CD8-positive, alpha-beta T cell (primary cell): ENCODE measurements at regions of chr19 and their contacts with region 1.

Region 1: DNA sequence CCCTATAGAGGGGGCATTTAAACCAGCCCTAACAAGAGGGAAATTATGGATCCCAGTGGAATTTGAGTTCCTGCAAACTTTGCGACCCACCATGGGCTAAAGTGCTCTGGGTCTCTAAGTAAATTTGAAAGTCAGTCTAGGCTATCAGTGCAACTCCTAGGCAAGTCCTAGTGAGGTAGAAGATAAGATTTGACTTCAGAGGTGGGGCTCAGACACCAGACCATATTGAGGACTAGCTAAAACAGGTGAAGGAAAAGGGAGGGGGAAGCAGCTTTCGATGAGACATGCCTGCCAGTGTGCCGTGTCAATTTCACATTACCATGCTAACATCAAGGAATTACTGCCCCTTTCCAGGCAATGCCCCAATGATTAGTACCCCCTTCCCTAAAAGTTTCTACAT is 38.4 kb downstream of the CD320 start:
- DNase-seq: peak in 1 of 9 experiments; percentile 39
- ATAC-seq: no peak
- H3K4me3 ChIP-seq: peak overlapping the region; percentile 69 to 90
- H3K4me3 Mint-ChIP-seq: peak overlapping the region; percentile 95
- H3K27ac ChIP-seq: peak overlapping the region; percentile 77 to 81
- H3K27ac Mint-ChIP-seq: peak overlapping the region; percentile 96
- H3K4me1 ChIP-seq: peaks cover 10% of the 10 kb centered on the region
- H3K4me1 Mint-ChIP-seq: peaks cover 16% of the 10 kb centered on the region
- H3K27me3 ChIP-seq: no peaks in the 10 kb centered on the region
- H3K27me3 Mint-ChIP-seq: no peaks in the 10 kb centered on the region
- CTCF ChIP-seq: no peak

Region 2: GRCh38 chr19:7550987-7551761 is 718.5 kb before region 1 on chr19:
- CTCF ChIA-PET with region 1: no interaction called
- POLR2A ChIA-PET with region 1: no interaction called
- intact Hi-C with region 1: no loop called
- DNase-seq: peak in 5 of 9 experiments; percentile 24 to 56 (median 45)
- ATAC-seq: peak; percentile 84
- H3K4me3 ChIP-seq: no peak overlapping the region
- H3K4me3 Mint-ChIP-seq: no peak overlapping the region
- H3K27ac ChIP-seq: no peak overlapping the region
- H3K27ac Mint-ChIP-seq: no peak overlapping the region
- H3K4me1 ChIP-seq: no peaks in the 10 kb centered on the region
- H3K4me1 Mint-ChIP-seq: peaks cover 8% of the 10 kb centered on the region
- H3K27me3 ChIP-seq: no peaks in the 10 kb centered on the region
- H3K27me3 Mint-ChIP-seq: no peaks in the 10 kb centered on the region
- CTCF ChIP-seq: no peak

Region 3: GRCh38 chr19:7618771-7619514 is 650.8 kb before region 1 on chr19:
- CTCF ChIA-PET with region 1: no interaction called
- POLR2A ChIA-PET with region 1: no interaction called
- intact Hi-C with region 1: no loop called
- DNase-seq: no peak
- ATAC-seq: no peak
- H3K4me3 ChIP-seq: no peak overlapping the region
- H3K4me3 Mint-ChIP-seq: no peak overlapping the region
- H3K27ac ChIP-seq: no peak overlapping the region
- H3K27ac Mint-ChIP-seq: no peak overlapping the region
- H3K4me1 ChIP-seq: no peaks in the 10 kb centered on the region
- H3K4me1 Mint-ChIP-seq: no peaks in the 10 kb centered on the region
- H3K27me3 ChIP-seq: no peaks in the 10 kb centered on the region
- H3K27me3 Mint-ChIP-seq: no peaks in the 10 kb centered on the region
- CTCF ChIP-seq: no peak

Region 4: DNA sequence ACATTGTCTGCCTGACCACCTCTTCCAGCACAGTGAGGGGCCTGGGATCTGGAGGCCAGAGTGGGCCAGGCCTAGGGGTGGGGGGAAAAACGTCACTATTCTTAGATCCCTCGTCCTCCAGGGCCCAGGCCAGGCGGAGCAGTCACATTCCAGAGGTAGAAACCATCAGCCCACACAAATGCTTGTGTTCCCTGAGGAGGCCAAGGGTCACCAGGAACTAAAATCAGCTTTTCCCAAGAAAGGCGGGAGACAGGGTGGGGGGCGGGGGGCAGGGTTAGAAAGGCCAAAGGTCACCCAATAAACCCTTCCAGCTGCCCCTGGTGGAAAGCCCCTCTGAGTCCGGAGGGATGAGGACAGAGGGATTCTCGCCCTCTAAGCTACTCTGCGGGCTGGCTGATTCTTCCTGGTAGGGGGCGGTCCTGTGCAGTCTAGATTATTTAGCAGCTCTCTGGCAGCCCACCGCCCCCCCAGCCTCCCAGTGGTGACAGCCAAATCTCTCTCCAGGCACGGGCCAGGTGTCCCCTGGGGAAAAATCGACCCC is 240.7 kb before region 1 on chr19:
- CTCF ChIA-PET with region 1: no interaction called
- POLR2A ChIA-PET with region 1: no interaction called
- intact Hi-C with region 1: no loop called
- DNase-seq: no peak
- ATAC-seq: no peak
- H3K4me3 ChIP-seq: no peak overlapping the region
- H3K4me3 Mint-ChIP-seq: no peak overlapping the region
- H3K27ac ChIP-seq: no peak overlapping the region
- H3K27ac Mint-ChIP-seq: no peak overlapping the region
- H3K4me1 ChIP-seq: no peaks in the 10 kb centered on the region
- H3K4me1 Mint-ChIP-seq: no peaks in the 10 kb centered on the region
- H3K27me3 ChIP-seq: no peaks in the 10 kb centered on the region
- H3K27me3 Mint-ChIP-seq: no peaks in the 10 kb centered on the region
- CTCF ChIP-seq: no peak

Region 5: GRCh38 chr19:8208922-8209461 is 60.7 kb before region 1 on chr19 and contains the start of gene CERS4:
- CTCF ChIA-PET with region 1: no interaction called
- POLR2A ChIA-PET with region 1: no interaction called
- intact Hi-C with region 1: no loop called
- DNase-seq: peak; percentile 43 to 87 (median 75)
- ATAC-seq: peak; percentile 85
- H3K4me3 ChIP-seq: peak within 1 kb of the TSS; percentile 75 to 86
- H3K4me3 Mint-ChIP-seq: peak within 1 kb of the TSS; percentile 85
- H3K27ac ChIP-seq: peak within 1 kb of the TSS; percentile 51 to 72
- H3K27ac Mint-ChIP-seq: peak within 1 kb of the TSS; percentile 87
- H3K4me1 ChIP-seq: peaks cover 22% of the 10 kb centered on the region
- H3K4me1 Mint-ChIP-seq: peaks cover 26% of the 10 kb centered on the region
- H3K27me3 ChIP-seq: no peaks in the 10 kb centered on the region
- H3K27me3 Mint-ChIP-seq: no peaks in the 10 kb centered on the region
- CTCF ChIP-seq: no peak
- total RNA-seq, gene CERS4: 6.9 to 7.2 TPM

Region 6: GRCh38 chr19:8307965-8308866 is 38.5 kb after region 1 on chr19 and contains the start of gene CD320:
- CTCF ChIA-PET with region 1: interaction called, 11 read pairs
- POLR2A ChIA-PET with region 1: no interaction called
- intact Hi-C with region 1: loop called (anchors 5 kb)
- DNase-seq: peak; percentile 71 to 92 (median 86)
- ATAC-seq: peak; percentile 93
- H3K4me3 ChIP-seq: peak within 1 kb of the TSS; percentile 63 to 64
- H3K4me3 Mint-ChIP-seq: peak within 1 kb of the TSS; percentile 91
- H3K27ac ChIP-seq: peak within 1 kb of the TSS; percentile 64 to 71
- H3K27ac Mint-ChIP-seq: peak within 1 kb of the TSS; percentile 94
- H3K4me1 ChIP-seq: peaks cover 29% of the 10 kb centered on the region
- H3K4me1 Mint-ChIP-seq: peaks cover 31% of the 10 kb centered on the region
- H3K27me3 ChIP-seq: no peaks in the 10 kb centered on the region
- H3K27me3 Mint-ChIP-seq: no peaks in the 10 kb centered on the region
- CTCF ChIP-seq: no peak
- total RNA-seq, gene CD320: 15.7 to 19.1 TPM

Region 7: GRCh38 chr19:8321060-8321985 is 51.6 kb after region 1 on chr19 and contains the starts of genes NDUFA7 and RPS28:
- CTCF ChIA-PET with region 1: interaction called, 19 read pairs
- POLR2A ChIA-PET with region 1: interaction called, 3 read pairs
- intact Hi-C with region 1: loop called in 1 of 2 experiments (anchors 1 kb)
- DNase-seq: peak; percentile 94 to 99 (median 97)
- ATAC-seq: peak; percentile 93
- H3K4me3 ChIP-seq: peak within 1 kb of the TSS; percentile 81 to 98
- H3K4me3 Mint-ChIP-seq: peak within 1 kb of the TSS; percentile 96
- H3K27ac ChIP-seq: peak within 1 kb of the TSS; percentile 90 to 96
- H3K27ac Mint-ChIP-seq: peak within 1 kb of the TSS; percentile 97
- H3K4me1 ChIP-seq: peaks cover 26% of the 10 kb centered on the region
- H3K4me1 Mint-ChIP-seq: peaks cover 37% of the 10 kb centered on the region
- H3K27me3 ChIP-seq: no peaks in the 10 kb centered on the region
- H3K27me3 Mint-ChIP-seq: no peaks in the 10 kb centered on the region
- CTCF ChIP-seq: no peak
- total RNA-seq, gene NDUFA7: 19.8 to 28.9 TPM
- total RNA-seq, gene RPS28: 3,224 to 3,257 TPM

Region 8: DNA sequence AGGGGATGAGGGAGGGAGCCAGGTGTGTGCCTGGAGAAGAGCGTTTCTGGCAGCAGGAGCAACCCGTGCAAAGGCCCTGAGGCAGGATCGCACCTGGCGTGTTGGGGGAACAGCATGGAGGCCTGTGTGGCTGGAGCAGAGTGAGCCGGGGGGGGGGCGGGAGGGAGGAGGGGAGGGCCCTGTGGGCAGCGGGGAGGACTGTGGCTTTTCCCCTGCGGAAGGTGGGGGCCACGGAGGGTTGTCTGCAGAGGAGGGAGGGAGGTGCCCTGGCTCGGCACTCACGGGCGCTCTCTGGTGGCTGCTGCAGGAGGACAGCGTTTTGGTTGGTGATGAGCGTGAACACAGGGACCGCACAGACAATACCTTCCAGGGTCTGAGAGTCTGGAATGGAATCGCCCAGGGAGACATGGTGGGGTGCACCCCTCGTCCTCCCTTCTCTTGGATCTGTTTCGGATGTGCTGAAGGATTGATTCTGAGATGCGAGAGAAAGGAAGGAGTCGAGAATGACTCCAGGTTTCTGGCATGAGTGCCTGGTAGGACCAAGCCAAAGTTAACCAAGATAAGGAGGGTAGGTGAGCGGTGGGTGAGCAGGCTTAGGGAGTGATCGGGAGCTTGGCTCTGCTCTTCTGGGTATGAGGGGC is 127.0 kb after region 1 on chr19:
- CTCF ChIA-PET with region 1: no interaction called
- POLR2A ChIA-PET with region 1: no interaction called
- intact Hi-C with region 1: loop called (anchors 5 kb)
- DNase-seq: peak; percentile 49 to 88 (median 69)
- ATAC-seq: peak; percentile 98
- H3K4me3 ChIP-seq: no peak overlapping the region
- H3K4me3 Mint-ChIP-seq: peak overlapping the region; percentile 6
- H3K27ac ChIP-seq: peak overlapping the region in 1 of 2 experiments; percentile 15
- H3K27ac Mint-ChIP-seq: peak overlapping the region; percentile 71
- H3K4me1 ChIP-seq: peaks cover 23% of the 10 kb centered on the region
- H3K4me1 Mint-ChIP-seq: peaks cover 31% of the 10 kb centered on the region
- H3K27me3 ChIP-seq: no peaks in the 10 kb centered on the region
- H3K27me3 Mint-ChIP-seq: no peaks in the 10 kb centered on the region
- CTCF ChIP-seq: peak; percentile 60